AG04450 (cell line): ENCODE measurements at regions of chr2 and their contacts with region 1.

Region 1: GRCh38 chr2:68500649-68501048 is 33.3 kb downstream of the APLF start:
- DNase-seq: no peak
- H3K4me3 ChIP-seq: no peak overlapping the region
- H3K27ac ChIP-seq: no peak overlapping the region
- H3K27me3 ChIP-seq: no peaks in the 10 kb centered on the region
- CTCF ChIP-seq: no peak

Region 2: DNA sequence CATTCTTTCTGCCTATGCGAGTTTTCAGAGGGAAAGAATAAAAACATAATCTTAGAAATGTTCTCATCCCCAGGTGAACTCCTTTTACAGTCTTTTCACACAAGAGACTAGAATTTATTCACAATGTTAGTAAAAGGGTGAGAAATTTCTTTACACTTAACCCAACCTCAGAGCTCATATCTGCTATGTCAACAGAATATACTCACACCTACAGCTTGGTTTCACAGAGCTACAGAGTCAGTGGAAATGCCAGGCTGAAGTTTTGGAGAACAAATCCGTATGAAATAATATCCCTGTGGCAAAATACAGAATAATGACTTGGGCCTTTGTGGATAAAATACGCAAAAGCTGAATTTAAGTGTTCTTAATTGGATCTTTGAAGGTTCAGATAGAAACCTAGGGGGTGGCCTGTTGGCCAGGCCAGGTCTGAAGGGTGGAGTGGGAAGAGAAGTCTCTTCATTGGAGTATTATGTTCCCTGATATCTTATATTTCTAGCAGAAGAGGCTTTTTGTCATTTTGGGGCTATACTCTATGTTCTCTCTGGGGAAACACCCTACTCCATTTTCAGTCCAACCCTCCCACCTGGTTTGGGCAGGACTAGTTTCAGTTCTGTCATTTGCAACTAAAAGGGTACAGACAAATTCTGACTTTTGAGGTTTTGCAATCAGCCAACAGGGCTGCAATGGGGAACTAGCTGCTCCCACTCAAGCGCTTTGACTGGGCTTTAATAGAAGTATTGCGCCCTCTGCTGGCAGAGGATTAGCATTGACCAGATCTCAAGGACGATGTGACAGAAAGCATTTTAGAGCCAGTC is 59.3 kb before region 1 on chr2:
- CTCF ChIA-PET with region 1: no interaction called
- POLR2A ChIA-PET with region 1: no interaction called
- DNase-seq: peak; percentile 66
- H3K4me3 ChIP-seq: no peak overlapping the region
- H3K27ac ChIP-seq: no peak overlapping the region
- H3K27me3 ChIP-seq: peaks cover 4% of the 10 kb centered on the region
- CTCF ChIP-seq: peak; percentile 87

Region 3: DNA sequence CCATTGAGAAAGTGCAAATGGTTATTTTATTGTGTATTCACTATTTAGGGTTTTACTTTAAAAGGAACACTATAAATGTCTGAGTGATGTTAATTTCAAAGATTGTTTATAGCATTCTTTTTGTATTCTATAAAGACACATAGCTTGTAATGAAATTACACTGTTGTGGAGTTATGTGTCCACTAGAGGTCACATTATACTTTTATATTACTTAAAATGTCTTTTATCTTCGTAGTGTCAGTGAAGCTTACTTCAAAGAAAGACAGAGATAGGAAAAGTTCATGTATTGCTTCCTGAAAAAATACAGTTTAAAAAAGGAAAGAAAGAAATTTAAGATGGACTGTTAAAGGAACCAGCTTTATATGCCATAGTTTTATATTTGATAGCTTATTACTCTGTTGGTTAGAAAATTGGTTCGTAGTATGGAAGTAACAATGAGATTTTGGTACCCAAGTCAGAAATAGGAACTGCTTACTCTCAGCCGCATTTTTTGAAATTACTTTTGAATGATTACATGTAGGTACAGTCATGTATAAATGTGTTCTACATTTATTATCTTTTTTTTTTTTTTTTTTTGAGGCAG is 12.8 kb before region 1 on chr2:
- CTCF ChIA-PET with region 1: interaction called, 14 read pairs
- POLR2A ChIA-PET with region 1: interaction called, 3 read pairs
- DNase-seq: no peak
- H3K4me3 ChIP-seq: no peak overlapping the region
- H3K27ac ChIP-seq: no peak overlapping the region
- H3K27me3 ChIP-seq: no peaks in the 10 kb centered on the region
- CTCF ChIP-seq: peak; percentile 49